ENCODE measurements at regions of chr1 and their contacts with region 1.

Region 1: DNA sequence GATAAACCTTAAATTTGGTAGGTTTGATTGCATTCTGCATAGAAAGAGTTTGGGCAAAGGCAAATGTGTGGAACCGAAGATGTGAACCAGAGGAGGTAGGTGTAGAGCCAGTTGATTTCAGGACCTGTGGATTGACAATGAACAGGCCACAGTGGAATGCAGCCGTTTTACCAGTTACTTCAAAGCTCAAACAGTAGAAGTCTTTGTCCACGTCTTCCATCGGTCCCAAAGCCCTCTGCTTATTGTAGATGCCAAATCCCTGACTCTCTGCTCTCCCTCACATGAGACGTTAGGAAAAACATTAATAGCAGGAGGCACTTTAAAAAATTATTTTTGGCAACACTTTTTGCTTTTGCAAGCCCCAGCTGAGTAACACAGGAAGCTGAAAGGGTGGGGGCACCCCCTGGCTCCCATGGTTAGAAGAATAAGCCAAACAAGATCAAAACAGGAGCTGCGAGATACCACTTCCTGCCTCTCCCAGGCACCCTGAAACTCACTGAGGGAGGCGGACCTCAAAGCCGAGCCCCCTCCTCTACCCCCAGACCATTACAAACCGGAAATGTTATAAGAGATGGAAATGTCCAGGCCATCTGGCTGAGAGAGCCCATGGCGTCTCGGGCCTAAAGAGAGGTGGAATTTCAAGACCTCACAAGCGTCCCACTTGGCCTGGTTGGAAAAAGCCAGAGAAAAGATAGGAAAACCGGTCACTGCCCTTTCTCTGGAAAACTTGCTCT is 13.5 kb downstream of the TRAF3IP3 start:
- DNase-seq: peak; percentile 71 to 92
- H3K4me3 ChIP-seq: peak overlapping the region; percentile 13 to 29
- H3K27ac ChIP-seq: peak overlapping the region; percentile 76 to 94
- H3K4me1 ChIP-seq: peaks cover 6 to 16% of the 10 kb centered on the region in 2 donors
- H3K27me3 ChIP-seq: no peaks in the 10 kb centered on the region
- CTCF ChIP-seq: no peak

Region 2: DNA sequence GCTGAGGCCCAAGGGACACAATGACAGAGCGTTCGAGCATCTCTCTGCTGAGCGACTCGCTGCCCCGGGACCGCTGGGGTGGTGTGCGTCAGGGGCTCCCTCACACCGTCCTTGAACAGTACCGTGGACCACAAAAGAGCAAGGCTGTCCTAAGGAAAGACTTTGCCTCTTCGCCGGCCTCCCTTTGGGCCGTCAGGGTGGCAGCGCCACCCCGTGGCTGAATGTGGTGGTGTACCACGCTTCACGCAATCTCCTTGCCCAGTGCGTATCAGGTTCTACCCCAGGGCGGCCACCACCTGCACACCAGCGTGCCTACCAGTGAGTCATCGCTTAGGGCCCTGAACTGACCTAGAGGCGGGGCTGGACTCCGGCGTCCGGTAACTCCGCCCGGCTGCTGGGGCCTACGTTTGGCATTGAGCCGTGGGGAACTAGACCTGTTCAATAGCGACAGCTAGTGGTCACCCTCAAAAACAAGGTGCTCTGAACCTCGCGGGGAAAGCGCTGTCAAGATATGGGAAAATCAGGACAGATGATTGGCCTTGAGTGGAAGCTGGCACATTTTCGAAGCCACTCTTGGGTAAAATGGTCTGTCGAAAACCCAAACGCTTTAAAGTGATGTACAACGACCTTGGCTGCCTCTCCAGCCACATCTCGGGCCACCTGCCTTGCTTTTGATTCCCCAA is 21.6 kb before region 1 on chr1:
- intact Hi-C with region 1: loop called (anchors 1 kb)
- DNase-seq: peak; percentile 81 to 95
- H3K4me3 ChIP-seq: peak overlapping the region; percentile 20 to 40
- H3K27ac ChIP-seq: peak overlapping the region; percentile 1 to 14
- H3K4me1 ChIP-seq: no peaks in the 10 kb centered on the region
- H3K27me3 ChIP-seq: no peaks in the 10 kb centered on the region
- CTCF ChIP-seq: peak; percentile 77 to 93 (median 86)

Region 3: GRCh38 chr1:209784265-209785169 is 15.2 kb after region 1 on chr1 and contains the start of gene C1orf74:
- intact Hi-C with region 1: loop called (anchors 1 kb)
- DNase-seq: peak; percentile 93 to 100
- H3K4me3 ChIP-seq: peak within 1 kb of the TSS; percentile 71 to 81
- H3K27ac ChIP-seq: peak within 1 kb of the TSS; percentile 75 to 85
- H3K4me1 ChIP-seq: peaks cover 0 to 12% of the 10 kb centered on the region in 2 donors
- H3K27me3 ChIP-seq: no peaks in the 10 kb centered on the region
- CTCF ChIP-seq: no peak
- total RNA-seq, gene C1orf74: 0.11 TPM